ENCODE measurements at regions of chr1 and their contacts with region 1.

Region 1: GRCh38 chr1:68120136-68120791 is 69.8 kb upstream of the DIRAS3 start:
- DNase-seq: peak; percentile 43 to 75 (median 69)
- H3K4me3 ChIP-seq: no peak overlapping the region
- H3K27ac ChIP-seq: no peak overlapping the region
- H3K4me1 ChIP-seq: no peaks in the 10 kb centered on the region
- H3K27me3 ChIP-seq: no peaks in the 10 kb centered on the region
- CTCF ChIP-seq: peak; percentile 75 to 92 (median 86)
- POLR2A ChIP-seq: no peak

Region 2: DNA sequence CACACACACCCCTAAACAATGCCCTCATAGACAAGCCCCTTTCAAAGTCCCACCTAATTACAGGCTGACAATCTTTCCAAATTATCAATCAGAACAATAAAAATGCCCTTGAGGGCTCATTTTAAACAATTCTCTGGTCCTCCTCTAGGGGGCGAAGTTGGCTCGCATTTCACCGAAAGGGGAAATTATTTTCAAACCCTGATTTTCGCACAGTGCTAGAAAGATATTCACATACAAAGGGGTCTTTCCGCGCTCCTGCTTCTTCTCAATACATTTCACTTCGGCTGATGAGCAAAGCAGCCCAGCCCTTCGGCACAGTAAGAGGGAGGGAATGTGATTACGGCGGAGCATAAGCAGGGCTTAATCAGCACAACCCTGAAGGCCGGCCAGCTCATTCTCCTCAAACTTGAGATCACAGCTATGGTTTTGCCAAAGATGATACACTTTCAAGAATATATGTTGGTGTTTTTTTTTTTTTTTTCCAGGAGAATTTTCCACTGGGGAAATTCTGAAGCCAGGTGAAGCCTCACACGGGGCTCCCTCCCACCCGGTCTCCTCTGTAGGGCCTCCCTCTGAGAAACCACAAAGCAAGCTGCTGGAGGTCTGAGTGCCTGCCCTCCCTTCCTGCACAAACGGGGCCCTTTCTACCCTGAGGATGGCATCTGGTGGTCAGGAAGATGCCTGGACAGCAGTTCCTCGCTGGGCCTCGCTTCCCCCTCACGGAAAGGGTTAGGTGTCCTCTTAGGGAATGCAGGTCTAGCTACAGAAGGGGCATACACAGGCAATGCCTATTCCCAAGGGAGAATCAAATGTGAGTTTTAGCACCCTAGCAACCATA is 353.9 kb before region 1 on chr1:
- intact Hi-C with region 1: loop called in 1 of 2 experiments (anchors 10 kb)
- DNase-seq: peak; percentile 72 to 88 (median 85)
- H3K4me3 ChIP-seq: peak overlapping the region in 2 of 4 donors; percentile 25 to 36
- H3K27ac ChIP-seq: peak overlapping the region; percentile 28 to 78 (median 62)
- H3K4me1 ChIP-seq: peaks cover 9% of the 10 kb centered on the region in 2 donors
- H3K27me3 ChIP-seq: no peaks in the 10 kb centered on the region
- CTCF ChIP-seq: peak; percentile 66 to 96 (median 82)
- POLR2A ChIP-seq: peak in 1 of 2 donors; percentile 35

Region 3: DNA sequence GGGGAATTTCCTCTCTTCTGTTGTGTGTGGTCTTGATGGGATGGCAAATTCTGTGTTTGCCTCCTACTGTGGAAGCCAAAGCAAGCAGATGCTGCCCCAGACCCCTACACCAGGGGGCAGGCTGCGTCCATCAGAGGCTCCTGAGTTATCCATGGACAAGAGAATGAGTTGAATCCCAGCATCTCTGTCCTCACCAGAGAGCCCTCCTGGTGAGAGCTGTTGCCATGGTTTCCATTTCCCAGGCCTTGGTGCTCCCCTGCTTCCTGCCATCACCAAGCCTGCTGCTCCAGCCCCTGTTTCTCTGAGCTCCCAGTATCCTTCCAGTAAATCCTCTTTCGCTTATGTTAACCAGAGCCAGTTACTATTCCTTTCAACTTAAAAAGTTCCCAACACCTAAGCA is 266.6 kb before region 1 on chr1:
- intact Hi-C with region 1: loop called in 1 of 2 experiments (anchors 10 kb)
- DNase-seq: peak; percentile 67 to 91 (median 78)
- H3K4me3 ChIP-seq: no peak overlapping the region
- H3K27ac ChIP-seq: no peak overlapping the region
- H3K4me1 ChIP-seq: peaks cover 5 to 10% of the 10 kb centered on the region in 2 donors
- H3K27me3 ChIP-seq: no peaks in the 10 kb centered on the region
- CTCF ChIP-seq: peak; percentile 80 to 87 (median 84)
- POLR2A ChIP-seq: no peak

Region 4: DNA sequence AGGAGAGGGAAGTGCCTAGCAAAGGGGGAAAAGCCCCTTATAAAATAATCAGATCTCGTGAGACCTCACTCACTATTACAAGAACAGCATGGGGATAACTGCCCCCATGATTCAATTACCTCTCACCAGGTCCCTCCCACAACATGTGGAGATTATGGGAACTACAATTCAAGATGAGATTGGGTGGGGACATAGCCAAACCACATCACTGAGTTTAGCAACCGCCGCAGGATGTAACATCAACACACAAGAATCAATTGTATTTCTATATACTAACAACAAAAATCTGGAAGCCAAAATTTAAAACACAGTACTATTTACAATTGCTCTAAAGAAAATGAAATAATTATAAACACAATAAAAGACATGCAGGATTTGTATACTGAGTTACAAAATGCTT is 91.7 kb before region 1 on chr1:
- intact Hi-C with region 1: no loop called
- DNase-seq: no peak
- H3K4me3 ChIP-seq: no peak overlapping the region
- H3K27ac ChIP-seq: no peak overlapping the region
- H3K4me1 ChIP-seq: no peaks in the 10 kb centered on the region
- H3K27me3 ChIP-seq: no peaks in the 10 kb centered on the region
- CTCF ChIP-seq: no peak
- POLR2A ChIP-seq: no peak

Region 5: DNA sequence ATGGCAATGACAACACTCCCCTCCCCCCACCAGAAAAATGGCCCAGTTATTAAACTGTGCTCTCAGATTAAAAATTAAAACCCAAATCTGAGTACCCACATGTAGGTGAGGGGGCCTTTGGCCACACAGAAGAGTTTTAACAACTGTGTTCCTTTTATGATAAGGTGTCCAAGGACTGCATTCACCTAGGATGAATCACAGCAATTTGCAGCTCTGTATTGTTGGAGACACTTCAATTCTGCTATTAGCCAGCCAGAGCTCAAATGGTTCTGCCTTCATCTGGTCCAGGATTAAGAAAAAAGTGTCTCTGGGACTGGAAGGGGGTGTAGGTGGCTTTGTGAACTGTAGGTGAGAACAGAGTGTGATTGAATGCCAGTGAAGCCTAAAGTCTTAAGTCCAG is 26.5 kb before region 1 on chr1:
- intact Hi-C with region 1: no loop called
- DNase-seq: no peak
- H3K4me3 ChIP-seq: no peak overlapping the region
- H3K27ac ChIP-seq: no peak overlapping the region
- H3K4me1 ChIP-seq: peaks cover 0 to 3% of the 10 kb centered on the region in 2 donors
- H3K27me3 ChIP-seq: no peaks in the 10 kb centered on the region
- CTCF ChIP-seq: no peak
- POLR2A ChIP-seq: no peak

Region 6: DNA sequence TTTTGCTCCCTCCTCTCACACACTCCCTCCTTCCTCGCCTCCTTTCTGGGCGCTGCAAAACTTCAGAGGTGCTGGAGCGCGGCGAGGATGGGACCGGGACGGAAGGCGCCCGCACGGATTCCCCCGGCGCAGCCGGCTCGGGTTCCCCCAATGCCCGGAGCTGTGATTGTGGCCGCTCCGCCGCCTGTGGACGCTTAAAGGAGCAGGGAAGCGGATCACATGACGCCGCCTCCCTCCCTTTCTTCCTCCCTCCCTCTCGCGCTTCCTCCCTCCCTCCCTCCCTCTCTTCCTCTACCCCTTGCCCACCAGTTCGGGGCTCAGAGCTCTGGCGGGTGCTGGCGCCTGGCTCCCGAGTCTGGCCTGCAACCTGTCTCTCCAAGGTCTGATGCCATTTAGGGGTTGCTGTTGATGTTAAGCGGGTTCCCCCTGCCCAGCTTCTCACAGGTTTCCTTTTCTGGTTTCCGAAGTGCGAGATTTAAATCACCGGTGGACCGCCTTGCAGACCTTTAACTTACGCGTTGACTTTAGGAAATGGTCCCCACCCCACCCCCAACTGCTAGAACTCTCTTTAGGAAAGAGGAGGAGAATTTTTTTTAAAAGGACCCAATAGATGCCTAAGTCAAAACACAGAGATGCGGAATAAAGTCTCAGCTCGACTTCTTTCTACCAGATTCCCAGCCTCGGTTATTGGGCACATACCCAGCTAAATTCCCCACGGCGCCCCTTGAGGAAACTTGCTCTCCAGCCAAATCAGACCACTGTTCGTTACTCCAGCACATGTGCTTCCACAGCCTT is 112.3 kb after region 1 on chr1 and contains the start of gene WLS:
- intact Hi-C with region 1: loop called (anchors 5 to 10 kb)
- DNase-seq: peak; percentile 74 to 86 (median 79)
- H3K4me3 ChIP-seq: peak within 1 kb of the TSS; percentile 25 to 88 (median 58)
- H3K27ac ChIP-seq: peak within 1 kb of the TSS in 4 of 5 donors; percentile 62 to 76 (median 68)
- H3K4me1 ChIP-seq: peaks cover 9 to 17% of the 10 kb centered on the region in 2 donors
- H3K27me3 ChIP-seq: no peaks in the 10 kb centered on the region
- CTCF ChIP-seq: peak in 4 of 6 experiments; percentile 3 to 31 (median 13)
- POLR2A ChIP-seq: peak; percentile 59 to 90
- total RNA-seq, gene WLS: 51.2 to 114 (median 78.9) TPM

Region 7: DNA sequence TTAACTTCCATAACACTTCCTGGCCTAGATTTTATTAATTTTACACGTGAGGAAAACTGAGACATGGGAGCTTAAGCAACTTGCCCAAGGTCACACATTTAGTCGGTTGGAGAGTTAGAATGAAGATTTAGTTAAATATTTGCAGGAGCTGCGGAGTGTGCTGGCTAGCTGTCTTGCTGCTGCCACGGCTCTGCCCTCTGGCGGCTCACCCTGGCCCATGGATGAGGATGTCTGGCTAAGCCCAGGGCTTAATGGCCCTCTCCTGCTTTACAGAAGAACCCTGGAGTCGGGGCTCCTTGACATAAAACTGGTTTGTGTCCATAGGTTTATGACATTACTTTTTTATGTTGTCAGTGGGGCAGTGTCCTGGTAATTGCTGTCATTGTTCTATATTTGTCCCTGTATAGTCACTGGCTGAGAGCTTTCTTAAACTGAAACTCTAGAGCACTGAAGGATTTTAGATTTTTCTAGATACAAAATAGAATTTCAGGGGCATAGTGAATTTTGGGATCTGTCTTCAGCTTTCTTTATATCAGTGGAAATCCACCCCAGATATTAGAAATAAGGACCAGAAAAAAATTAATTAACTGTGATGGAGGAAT is 200.9 kb after region 1 on chr1:
- intact Hi-C with region 1: loop called in 1 of 2 experiments (anchors 10 kb)
- DNase-seq: peak; percentile 62 to 86 (median 80)
- H3K4me3 ChIP-seq: no peak overlapping the region
- H3K27ac ChIP-seq: no peak overlapping the region
- H3K4me1 ChIP-seq: peaks cover 0 to 7% of the 10 kb centered on the region in 2 donors
- H3K27me3 ChIP-seq: no peaks in the 10 kb centered on the region
- CTCF ChIP-seq: peak; percentile 59 to 74 (median 70)
- POLR2A ChIP-seq: no peak

Region 8: DNA sequence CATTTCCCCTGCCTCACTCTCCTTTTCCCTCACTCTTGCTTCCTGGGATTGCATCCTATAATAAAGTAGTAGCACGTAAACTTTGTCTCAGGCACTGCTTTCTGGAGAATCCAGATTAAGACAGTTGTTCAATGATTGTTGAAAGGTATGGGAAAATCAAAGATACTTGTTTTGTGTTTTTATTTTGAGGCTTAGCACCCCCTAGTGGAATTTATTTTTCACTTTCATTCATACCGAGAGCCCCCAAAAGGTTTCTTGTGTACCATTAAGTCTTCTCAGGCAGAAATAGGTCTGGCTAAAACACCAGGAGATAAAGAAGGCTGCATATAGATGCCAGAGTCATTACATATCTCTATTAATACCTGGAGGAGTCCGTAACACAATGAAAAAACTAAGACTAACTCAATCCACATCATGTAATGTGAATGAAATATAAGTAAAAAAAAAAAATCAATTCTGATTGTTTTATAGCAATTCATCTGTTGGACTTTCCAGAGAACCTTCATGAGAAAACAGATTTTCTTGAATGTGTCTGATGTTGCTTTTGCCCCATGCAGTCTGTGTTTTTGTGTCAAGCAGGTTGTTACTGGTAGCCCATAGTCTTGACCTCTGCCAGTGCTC is 226.0 kb after region 1 on chr1:
- intact Hi-C with region 1: loop called (anchors 2 to 5 kb)
- DNase-seq: no peak
- H3K4me3 ChIP-seq: no peak overlapping the region
- H3K27ac ChIP-seq: no peak overlapping the region
- H3K4me1 ChIP-seq: peaks cover 0 to 2% of the 10 kb centered on the region in 2 donors
- H3K27me3 ChIP-seq: no peaks in the 10 kb centered on the region
- CTCF ChIP-seq: peak; percentile 25 to 55 (median 40)
- POLR2A ChIP-seq: no peak

Region 9: DNA sequence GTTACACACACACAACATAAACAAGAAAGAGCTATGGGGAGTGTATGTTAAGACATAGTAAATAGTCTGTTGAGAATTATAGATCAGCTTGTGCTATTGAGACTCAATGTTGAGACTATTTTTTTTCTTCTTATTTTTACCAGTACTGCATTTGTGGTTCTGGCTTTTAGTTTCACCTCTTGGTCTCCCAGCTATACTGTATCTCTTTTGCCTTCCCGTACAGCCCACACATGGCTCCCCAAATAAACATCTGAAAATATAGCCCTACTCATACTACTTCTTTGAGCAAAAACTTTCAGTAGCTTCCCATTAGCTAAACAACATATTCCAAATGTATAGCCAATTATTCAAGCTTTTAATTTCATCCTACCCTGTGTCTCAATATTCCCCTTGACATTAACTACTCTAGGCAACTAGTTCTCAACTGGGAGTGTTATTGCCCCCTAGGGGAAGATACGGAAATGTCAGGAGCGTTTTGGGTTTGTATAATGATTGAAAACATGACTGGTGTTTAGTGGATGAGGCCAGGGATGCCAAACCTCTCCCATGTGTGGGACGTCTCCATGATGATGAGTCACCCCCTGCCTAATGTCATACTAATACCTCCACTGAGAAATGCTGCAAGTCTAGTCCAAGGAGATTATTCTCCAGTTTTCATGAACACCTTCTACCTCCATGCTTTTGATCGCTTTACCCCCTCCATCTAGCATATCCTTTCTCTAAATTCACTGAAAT is 322.7 kb after region 1 on chr1:
- intact Hi-C with region 1: loop called in 1 of 2 experiments (anchors 10 kb)
- DNase-seq: peak; percentile 19 to 58 (median 44)
- H3K4me3 ChIP-seq: no peak overlapping the region
- H3K27ac ChIP-seq: no peak overlapping the region
- H3K4me1 ChIP-seq: no peaks in the 10 kb centered on the region
- H3K27me3 ChIP-seq: no peaks in the 10 kb centered on the region
- CTCF ChIP-seq: peak; percentile 47 to 61 (median 55)
- POLR2A ChIP-seq: no peak